Activated CD4-positive, alpha-beta T cell treated with anti-CD3 and anti-CD28 coated beads, Interleukin-2, amount 10 ng/mL, durations not matched to agents 24 days and 14 days (primary cell): ENCODE measurements at regions of chr10 and their contacts with region 1.

Region 1: GRCh38 chr10:99620713-99621453 is 644 bp upstream of the SLC25A28 start:
- DNase-seq: peak; percentile 97
- H3K4me3 Mint-ChIP-seq: peak overlapping the region; percentile 92
- H3K27ac Mint-ChIP-seq: peak overlapping the region; percentile 96
- H3K4me1 Mint-ChIP-seq: peaks cover 35% of the 10 kb centered on the region
- H3K27me3 Mint-ChIP-seq: no peaks in the 10 kb centered on the region

Region 2: GRCh38 chr10:98134431-98135221 is 1486.3 kb before region 1 on chr10 and contains the start of gene R3HCC1L:
- intact Hi-C with region 1: loop called (anchors 10 kb)
- DNase-seq: peak; percentile 98
- H3K4me3 Mint-ChIP-seq: peak within 1 kb of the TSS; percentile 94
- H3K27ac Mint-ChIP-seq: peak within 1 kb of the TSS; percentile 88
- H3K4me1 Mint-ChIP-seq: peaks cover 36% of the 10 kb centered on the region
- H3K27me3 Mint-ChIP-seq: peaks cover 2% of the 10 kb centered on the region
- total RNA-seq, gene R3HCC1L: 17.6 and 19.3 TPM in 2 replicates

Region 3: GRCh38 chr10:99430451-99431189 is 190.3 kb before region 1 on chr10 and contains the start of gene GOT1:
- intact Hi-C with region 1: loop called (anchors 1 kb)
- DNase-seq: peak; percentile 98
- H3K4me3 Mint-ChIP-seq: peak within 1 kb of the TSS; percentile 99
- H3K27ac Mint-ChIP-seq: peak within 1 kb of the TSS; percentile 98
- H3K4me1 Mint-ChIP-seq: peaks cover 30% of the 10 kb centered on the region
- H3K27me3 Mint-ChIP-seq: no peaks in the 10 kb centered on the region
- total RNA-seq, gene GOT1: 37.2 and 38.0 TPM in 2 replicates

Region 4: DNA sequence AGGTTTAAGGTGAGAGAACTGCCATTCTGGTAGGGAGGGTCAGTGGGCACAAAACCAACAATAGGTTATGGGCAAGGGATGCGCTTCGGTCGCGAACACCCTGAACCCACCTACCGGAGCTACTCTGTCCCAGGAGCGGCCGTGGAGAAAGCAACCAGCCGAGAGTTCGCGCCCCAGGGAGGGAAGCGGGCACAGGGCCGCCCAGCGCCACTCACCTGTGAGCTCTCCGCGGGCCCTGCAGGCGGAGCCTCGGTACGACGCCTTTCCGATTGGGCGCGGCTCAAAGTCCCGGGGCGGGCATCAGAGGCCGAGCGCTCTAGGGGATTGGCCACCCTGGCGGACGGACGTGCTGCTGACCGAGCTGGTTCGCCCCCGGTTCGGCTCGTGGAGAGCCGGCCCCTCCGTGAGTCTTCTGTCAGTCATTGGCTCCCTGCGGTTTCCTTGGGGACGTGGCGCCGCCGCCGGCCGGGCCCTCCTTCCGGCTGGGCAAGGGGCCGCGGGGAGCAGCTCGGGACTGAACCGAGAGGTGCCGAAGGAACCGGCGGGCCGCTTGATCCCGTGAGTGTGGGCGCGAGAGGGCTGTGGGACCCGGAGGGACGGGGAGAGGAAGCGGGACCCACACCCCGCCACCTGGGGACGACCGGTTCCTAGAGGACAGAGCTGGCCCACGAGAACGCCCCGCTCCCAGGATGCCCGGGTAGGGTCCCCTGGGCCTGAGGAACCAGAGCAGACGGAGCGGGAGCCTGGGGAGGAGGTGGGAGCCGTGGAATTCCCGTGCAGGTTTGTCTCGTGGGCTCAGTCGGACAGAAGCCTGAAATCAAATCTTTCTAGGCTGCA is 38.4 kb after region 1 on chr10 and contains the start of gene ENTPD7:
- intact Hi-C with region 1: loop called (anchors 1 kb)
- DNase-seq: peak; percentile 97
- H3K4me3 Mint-ChIP-seq: peak within 1 kb of the TSS; percentile 87
- H3K27ac Mint-ChIP-seq: peak within 1 kb of the TSS; percentile 85
- H3K4me1 Mint-ChIP-seq: peaks cover 18% of the 10 kb centered on the region
- H3K27me3 Mint-ChIP-seq: peaks cover 18% of the 10 kb centered on the region
- total RNA-seq, gene ENTPD7: 8.2 and 8.3 TPM in 2 replicates